ENCODE measurements at regions of chr11 and their contacts with region 1.

Region 1: GRCh38 chr11:46006418-46007070 is 84.1 kb downstream of the LARGE2 start:
- DNase-seq: peak in 3 of 9 experiments; percentile 21 to 77 (median 68)
- ATAC-seq: peak; percentile 78
- H3K4me3 ChIP-seq: no peak overlapping the region
- H3K4me3 Mint-ChIP-seq: no peak overlapping the region
- H3K27ac ChIP-seq: no peak overlapping the region
- H3K27ac Mint-ChIP-seq: no peak overlapping the region
- H3K4me1 ChIP-seq: no peaks in the 10 kb centered on the region
- H3K4me1 Mint-ChIP-seq: peaks cover 2% of the 10 kb centered on the region
- H3K27me3 ChIP-seq: no peaks in the 10 kb centered on the region
- H3K27me3 Mint-ChIP-seq: no peaks in the 10 kb centered on the region
- CTCF ChIP-seq: peak; percentile 81

Region 2: DNA sequence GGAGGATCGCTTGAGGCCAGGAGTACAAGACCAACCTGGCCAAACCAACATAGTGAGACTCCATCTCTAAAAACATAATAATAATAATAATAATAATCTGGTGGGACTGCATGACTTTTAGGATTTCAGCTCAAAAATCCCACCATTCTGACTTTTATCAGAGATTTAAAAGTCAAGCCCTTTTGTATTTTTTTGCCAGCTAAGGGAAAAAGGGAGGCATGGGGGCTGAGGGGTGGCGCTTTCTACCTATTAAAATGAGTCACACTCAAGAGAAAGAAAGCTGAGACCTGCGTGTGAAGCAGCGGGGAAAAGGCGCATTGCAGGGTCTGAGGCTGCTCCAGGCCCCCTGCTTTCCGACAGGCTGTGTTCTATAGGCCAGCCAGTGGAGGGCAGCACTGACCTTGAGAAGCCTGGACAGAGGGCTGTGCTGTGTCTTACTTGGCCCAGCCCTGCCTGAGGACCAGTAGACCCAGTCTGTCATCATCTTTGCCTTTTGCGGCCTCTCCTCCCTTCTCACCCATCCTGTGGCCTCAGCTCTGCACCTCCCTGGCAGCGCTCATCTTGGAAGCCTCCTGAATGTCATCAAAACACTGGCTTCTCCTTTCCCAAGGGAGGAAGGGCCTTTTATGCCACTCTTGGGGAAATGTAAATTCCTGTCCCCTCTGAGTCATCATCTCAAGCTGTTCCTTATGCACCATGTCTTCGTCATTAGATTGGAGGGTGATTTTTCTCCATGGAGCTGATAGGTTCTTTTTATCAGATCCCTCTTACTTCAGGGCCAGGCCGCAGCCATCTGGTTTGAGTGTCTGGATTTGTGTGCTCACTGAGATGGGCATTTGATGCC is 133.8 kb before region 1 on chr11:
- CTCF ChIA-PET with region 1: interaction called, 7 read pairs
- POLR2A ChIA-PET with region 1: no interaction called
- intact Hi-C with region 1: loop called (anchors 2 to 10 kb)
- DNase-seq: peak in 6 of 9 experiments; percentile 16 to 55 (median 45)
- ATAC-seq: peak; percentile 83
- H3K4me3 ChIP-seq: no peak overlapping the region
- H3K4me3 Mint-ChIP-seq: no peak overlapping the region
- H3K27ac ChIP-seq: no peak overlapping the region
- H3K27ac Mint-ChIP-seq: no peak overlapping the region
- H3K4me1 ChIP-seq: no peaks in the 10 kb centered on the region
- H3K4me1 Mint-ChIP-seq: no peaks in the 10 kb centered on the region
- H3K27me3 ChIP-seq: no peaks in the 10 kb centered on the region
- H3K27me3 Mint-ChIP-seq: no peaks in the 10 kb centered on the region
- CTCF ChIP-seq: peak; percentile 32

Region 3: GRCh38 chr11:45993531-45994001 is 13.0 kb before region 1 on chr11:
- CTCF ChIA-PET with region 1: interaction called, 11 read pairs
- POLR2A ChIA-PET with region 1: no interaction called
- intact Hi-C with region 1: no loop called
- DNase-seq: no peak
- ATAC-seq: no peak
- H3K4me3 ChIP-seq: no peak overlapping the region
- H3K4me3 Mint-ChIP-seq: no peak overlapping the region
- H3K27ac ChIP-seq: no peak overlapping the region
- H3K27ac Mint-ChIP-seq: no peak overlapping the region
- H3K4me1 ChIP-seq: no peaks in the 10 kb centered on the region
- H3K4me1 Mint-ChIP-seq: peaks cover 9% of the 10 kb centered on the region
- H3K27me3 ChIP-seq: no peaks in the 10 kb centered on the region
- H3K27me3 Mint-ChIP-seq: no peaks in the 10 kb centered on the region
- CTCF ChIP-seq: no peak